Activated CD8-positive, alpha-beta T cell treated with anti-CD3 and anti-CD28 coated beads, Interleukin-2, amount 10 ng/mL, durations not matched to agents 7 days and 5 days (primary cell): ENCODE measurements at regions of chr6 and their contacts with region 1.

Region 1: GRCh38 chr6:43308101-43308989 is at the start of gene CRIP3:
- DNase-seq: peak; percentile 53
- ATAC-seq: peak; percentile 89
- H3K4me3 Mint-ChIP-seq: peak within 1 kb of the TSS; percentile 63
- H3K27ac Mint-ChIP-seq: no peak within 1 kb of the TSS
- H3K4me1 Mint-ChIP-seq: peaks cover 12% of the 10 kb centered on the region
- H3K27me3 Mint-ChIP-seq: peaks cover 14% of the 10 kb centered on the region
- total RNA-seq, gene CRIP3: not detected

Region 2: DNA sequence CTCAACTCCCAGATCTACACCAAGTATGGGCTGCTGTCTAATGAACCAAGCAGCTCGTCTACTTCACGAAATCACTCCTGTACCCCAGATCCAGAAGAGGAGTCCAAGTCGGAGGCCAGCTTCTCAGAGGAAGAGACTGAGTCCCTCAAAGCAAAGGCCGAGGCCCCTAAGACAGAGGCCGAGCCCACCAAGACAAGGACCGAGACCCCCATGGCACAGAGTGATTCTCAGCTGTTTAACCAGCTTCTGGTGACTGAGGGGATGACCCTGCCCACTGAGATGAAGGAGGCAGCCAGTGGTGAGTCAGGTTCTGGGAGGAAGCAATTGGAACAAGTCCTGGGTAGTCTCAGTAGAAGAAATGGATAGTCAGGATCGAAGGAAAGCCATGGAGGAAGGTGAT is 120.5 kb before region 1 on chr6:
- CTCF ChIA-PET with region 1: no interaction called
- POLR2A ChIA-PET with region 1: no interaction called
- DNase-seq: no peak
- ATAC-seq: no peak
- H3K4me3 Mint-ChIP-seq: no peak overlapping the region
- H3K27ac Mint-ChIP-seq: no peak overlapping the region
- H3K4me1 Mint-ChIP-seq: peaks cover 38% of the 10 kb centered on the region
- H3K27me3 Mint-ChIP-seq: no peaks in the 10 kb centered on the region

Region 3: DNA sequence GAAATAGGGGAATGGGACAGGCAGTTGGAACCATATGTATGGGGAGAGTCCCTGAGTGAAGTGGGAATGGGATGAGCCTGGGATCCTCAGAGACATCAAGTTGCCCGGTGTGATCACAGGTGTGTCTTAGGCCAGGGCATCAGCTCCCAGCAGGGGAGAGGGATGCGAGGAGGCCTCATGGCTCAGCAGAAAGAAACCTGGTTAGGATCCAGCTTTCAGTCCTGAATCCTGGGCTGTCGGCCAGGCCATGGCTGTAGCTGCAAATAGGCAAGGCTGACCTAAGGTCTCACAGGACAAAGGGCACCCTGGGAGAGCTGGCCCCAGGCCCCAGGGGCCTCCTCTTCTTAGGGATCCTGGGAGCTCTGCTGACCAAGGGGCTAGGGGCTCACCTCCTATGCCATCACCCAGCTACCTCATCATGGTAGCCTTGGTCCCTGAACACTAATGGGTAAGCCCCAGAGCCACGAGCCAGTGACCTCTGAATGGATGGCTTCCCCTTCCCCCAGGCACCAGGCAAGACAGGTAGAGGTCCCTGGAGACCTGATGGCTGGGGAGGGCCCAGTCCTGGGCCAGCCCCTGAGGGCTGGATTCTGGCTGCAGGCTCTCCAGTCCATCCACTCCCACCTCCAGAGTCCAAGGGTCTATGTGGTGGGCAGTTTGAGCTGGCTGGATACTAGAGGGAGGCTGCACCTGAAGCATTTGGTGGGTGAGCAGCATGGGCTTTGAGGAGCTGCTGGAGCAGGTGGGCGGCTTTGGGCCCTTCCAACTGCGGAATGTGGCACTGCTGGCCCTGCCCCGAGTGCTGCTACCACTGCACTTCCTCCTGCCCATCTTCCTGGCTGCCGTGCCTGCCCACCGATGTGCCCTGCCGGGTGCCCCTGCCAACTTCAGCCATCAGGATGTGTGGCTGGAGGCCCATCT is 10.4 kb before region 1 on chr6 and contains the start of gene SLC22A7:
- CTCF ChIA-PET with region 1: interaction called, 14 read pairs
- POLR2A ChIA-PET with region 1: no interaction called
- DNase-seq: no peak
- ATAC-seq: no peak
- H3K4me3 Mint-ChIP-seq: no peak within 1 kb of the TSS
- H3K27ac Mint-ChIP-seq: no peak within 1 kb of the TSS
- H3K4me1 Mint-ChIP-seq: no peaks in the 10 kb centered on the region
- H3K27me3 Mint-ChIP-seq: peaks cover 14% of the 10 kb centered on the region
- total RNA-seq, gene SLC22A7: not detected

Region 4: GRCh38 chr6:43391440-43392031 is 83.2 kb after region 1 on chr6:
- CTCF ChIA-PET with region 1: interaction called, 28 read pairs
- POLR2A ChIA-PET with region 1: no interaction called
- DNase-seq: peak; percentile 62
- ATAC-seq: peak; percentile 83
- H3K4me3 Mint-ChIP-seq: no peak overlapping the region
- H3K27ac Mint-ChIP-seq: no peak overlapping the region
- H3K4me1 Mint-ChIP-seq: peaks cover 21% of the 10 kb centered on the region
- H3K27me3 Mint-ChIP-seq: peaks cover 74% of the 10 kb centered on the region